Esophagus squamous epithelium (tissue), 5 donors: ENCODE measurements at regions of chr18 and their contacts with region 1.

Region 1: DNA sequence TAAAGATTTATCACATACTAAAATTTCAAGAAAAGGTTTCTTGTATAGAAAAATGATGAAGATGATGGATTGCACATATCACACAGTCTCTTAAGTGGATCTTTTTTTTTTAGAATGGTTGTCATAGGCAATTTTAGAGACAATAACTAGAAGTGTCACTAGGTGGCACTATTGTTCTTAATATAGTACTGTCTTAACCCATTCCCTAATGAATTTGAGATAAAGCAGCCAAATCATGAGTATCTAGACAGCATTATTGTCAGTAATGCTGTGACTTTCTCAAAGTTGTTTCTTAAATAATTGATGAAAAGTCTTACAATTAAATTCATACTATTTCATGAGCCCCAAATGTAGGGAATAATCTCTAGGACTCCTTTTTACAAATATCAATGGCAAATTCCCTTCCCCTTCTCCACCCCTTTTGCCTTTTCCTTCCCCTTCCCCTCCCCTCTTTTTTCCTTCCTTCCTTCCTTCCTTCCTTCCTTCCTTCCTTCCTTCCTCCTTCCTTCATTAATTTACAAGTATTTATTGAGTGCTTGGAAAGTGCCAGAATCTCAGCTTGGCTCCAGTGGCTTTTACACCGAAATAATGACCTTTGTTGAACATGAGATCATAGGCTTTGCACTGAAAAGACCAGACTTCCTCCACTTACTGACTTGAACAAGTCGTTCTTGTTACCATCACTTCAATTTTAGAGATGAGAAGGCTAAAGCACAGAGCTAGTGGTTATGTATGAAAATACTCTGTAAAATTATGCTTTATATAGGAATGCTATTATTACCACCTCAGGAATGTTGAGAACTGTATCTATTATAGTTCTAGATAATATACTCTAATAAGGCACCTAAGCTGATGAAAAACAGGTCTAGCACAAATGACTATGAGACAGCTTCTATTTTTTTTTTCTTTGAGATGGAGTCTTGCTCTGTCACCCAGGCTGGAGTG is 19.8 kb downstream of the MYL12B start:
- DNase-seq: no peak
- H3K4me3 ChIP-seq: no peak overlapping the region
- H3K27ac ChIP-seq: peak overlapping the region in 2 of 4 donors; percentile 11 to 17
- H3K4me1 ChIP-seq: peaks cover 0 to 26% (median 5%) of the 10 kb centered on the region in 3 donors
- H3K27me3 ChIP-seq: no peaks in the 10 kb centered on the region
- CTCF ChIP-seq: peak; percentile 54 to 81 (median 62)
- POLR2A ChIP-seq: no peak

Region 2: GRCh38 chr18:3186678-3187658 is 94.8 kb before region 1 on chr18:
- intact Hi-C with region 1: no loop called
- DNase-seq: no peak
- H3K4me3 ChIP-seq: no peak overlapping the region
- H3K27ac ChIP-seq: no peak overlapping the region
- H3K4me1 ChIP-seq: no peaks in the 10 kb centered on the region
- H3K27me3 ChIP-seq: no peaks in the 10 kb centered on the region
- CTCF ChIP-seq: no peak
- POLR2A ChIP-seq: no peak

Region 3: DNA sequence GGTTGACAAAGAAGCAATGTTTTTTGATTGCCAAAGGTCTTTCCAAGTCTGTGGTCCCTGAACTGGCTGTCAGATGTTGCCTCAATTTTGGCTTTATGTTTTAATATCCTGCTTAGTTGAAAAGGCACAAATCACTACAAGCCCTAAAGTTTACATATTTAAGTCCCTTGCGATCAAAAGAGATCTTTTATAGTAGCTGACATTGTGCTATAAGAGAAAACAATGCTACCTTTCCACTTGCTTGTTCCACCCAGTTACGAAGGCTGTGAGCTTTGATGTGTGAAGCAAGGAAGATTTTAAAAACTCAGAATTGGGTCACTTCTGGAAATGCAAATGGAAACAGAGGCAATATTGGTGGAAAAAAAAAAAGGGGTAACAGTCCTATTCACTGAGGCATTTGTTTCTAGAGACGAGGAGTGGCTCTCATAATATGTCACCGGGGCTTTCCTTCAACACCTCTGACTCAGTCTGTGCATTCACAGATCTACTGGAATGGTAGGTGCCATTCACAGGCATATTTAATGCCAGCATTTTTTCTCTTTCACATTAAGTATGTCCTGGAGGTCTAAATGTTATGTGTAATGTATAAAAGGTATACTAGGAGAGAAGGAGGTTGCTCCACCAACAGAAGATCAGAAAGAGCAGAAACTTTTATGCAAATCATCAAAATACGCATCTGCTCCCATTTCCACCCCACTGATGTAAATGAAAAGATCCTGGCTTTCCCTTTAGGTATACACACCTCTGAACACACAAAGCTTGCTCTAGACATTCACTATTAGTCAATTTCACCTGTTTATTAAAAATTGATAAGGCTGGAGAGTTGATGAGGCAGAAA is 260.0 kb after region 1 on chr18:
- intact Hi-C with region 1: no loop called
- DNase-seq: no peak
- H3K4me3 ChIP-seq: no peak overlapping the region
- H3K27ac ChIP-seq: peak overlapping the region in 3 of 4 donors; percentile 46 to 84 (median 63)
- H3K4me1 ChIP-seq: peaks cover 5 to 48% (median 16%) of the 10 kb centered on the region in 3 donors
- H3K27me3 ChIP-seq: no peaks in the 10 kb centered on the region
- CTCF ChIP-seq: no peak
- POLR2A ChIP-seq: no peak

Region 4: DNA sequence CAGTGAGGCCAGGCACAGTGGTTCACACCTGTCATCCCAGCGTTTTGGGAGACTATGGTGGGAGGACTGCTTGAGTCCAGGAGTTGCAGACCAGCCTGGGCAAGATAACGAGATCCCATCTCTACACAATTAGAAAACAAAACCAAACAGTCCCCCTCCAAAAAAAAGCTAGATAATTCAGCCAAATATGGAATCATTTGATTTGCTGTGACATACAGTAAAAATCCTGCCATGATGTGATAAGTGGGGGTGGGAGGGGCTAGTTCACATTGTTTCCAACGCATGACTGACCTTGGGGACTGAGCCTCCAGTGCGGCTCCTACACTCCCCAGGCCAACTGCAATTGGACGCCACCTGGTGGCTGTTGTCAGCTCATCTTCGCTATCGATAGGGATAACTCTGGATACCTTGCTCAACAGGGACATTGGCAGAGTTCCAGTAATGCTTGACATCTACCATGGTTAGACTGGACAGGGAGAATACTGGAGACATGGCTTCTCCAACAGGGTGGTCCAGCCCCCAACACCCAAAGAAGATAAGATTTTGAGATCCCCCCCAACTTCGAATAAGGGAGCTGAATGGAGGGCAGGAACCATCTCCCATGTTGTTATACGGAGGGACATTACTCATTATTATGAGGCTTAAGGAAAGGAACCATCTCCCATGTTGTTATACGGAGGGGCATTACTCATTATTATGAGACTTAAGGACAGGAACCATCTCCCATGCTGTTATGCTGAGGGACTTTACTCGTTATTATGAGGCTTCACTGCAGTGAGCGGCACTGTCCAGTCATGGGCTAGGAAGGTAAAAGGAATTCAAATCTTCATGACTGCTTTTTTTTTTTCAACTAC is 304.2 kb after region 1 on chr18:
- intact Hi-C with region 1: loop called (anchors 5 kb)
- DNase-seq: peak; percentile 10
- H3K4me3 ChIP-seq: no peak overlapping the region
- H3K27ac ChIP-seq: peak overlapping the region in 1 of 4 donors; percentile 2
- H3K4me1 ChIP-seq: peaks cover 3 to 36% (median 6%) of the 10 kb centered on the region in 3 donors
- H3K27me3 ChIP-seq: no peaks in the 10 kb centered on the region
- CTCF ChIP-seq: peak; percentile 43 to 88 (median 74)
- POLR2A ChIP-seq: no peak